Head of caudate nucleus (tissue), 42 donors: ENCODE measurements at regions of chr21 and their contacts with region 1.

Region 1: GRCh38 chr21:32412162-32413014 is at the start of gene EVA1C:
- DNase-seq: peak in 40 of 42 donors; percentile 28 to 77 (median 61)

Region 2: GRCh38 chr21:32359711-32360260 is 52.6 kb before region 1 on chr21:
- intact Hi-C with region 1: no loop called
- DNase-seq: peak in 13 of 42 donors; percentile 22 to 61 (median 42)

Region 3: DNA sequence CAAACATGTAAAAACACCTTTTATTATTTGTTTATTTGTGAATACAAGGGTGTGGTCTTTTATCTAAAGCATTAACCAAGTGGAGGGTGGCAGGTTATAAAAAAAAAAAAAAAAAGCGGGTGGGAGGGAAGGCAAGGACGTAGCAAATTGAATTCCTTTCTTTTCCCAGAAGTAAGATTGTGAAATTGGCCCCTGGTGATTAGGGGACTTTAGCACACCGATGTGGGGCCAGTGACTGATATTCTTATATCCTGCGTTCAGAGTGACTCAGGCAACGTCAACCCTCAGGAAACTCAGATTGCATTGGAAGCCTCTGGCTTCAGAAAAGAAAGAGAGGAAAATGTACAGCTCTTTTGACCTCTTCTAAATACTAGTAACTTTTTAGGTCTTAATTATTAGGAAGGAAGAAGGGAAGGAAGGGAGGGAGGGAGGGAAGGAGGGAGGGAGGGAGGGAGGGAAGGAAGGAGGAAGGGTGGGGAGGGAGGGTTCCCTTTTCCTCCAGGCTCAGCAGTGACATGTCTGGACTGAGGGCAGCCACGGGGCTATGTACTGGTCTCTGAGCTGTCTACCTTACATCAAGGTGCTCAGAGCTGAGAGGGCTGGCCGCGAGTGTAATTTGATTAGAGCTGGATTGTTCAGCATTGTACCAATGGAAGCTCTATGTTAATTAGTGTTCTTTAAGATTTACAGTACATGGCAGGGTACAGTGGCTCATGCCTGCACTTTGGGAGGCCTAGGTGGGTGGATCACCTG is 30.4 kb after region 1 on chr21:
- intact Hi-C with region 1: no loop called
- DNase-seq: no peak

Region 4: GRCh38 chr21:32463889-32464300 is 51.5 kb after region 1 on chr21:
- intact Hi-C with region 1: loop called (anchors 10 kb)
- DNase-seq: peak in 1 of 42 donors; percentile 53

Region 5: GRCh38 chr21:32523988-32524719 is 111.8 kb after region 1 on chr21:
- intact Hi-C with region 1: no loop called
- DNase-seq: no peak

Region 6: GRCh38 chr21:32604464-32604863 is 192.1 kb after region 1 on chr21:
- intact Hi-C with region 1: loop called (anchors 5 kb)
- DNase-seq: peak in 1 of 42 donors; percentile 10